GM13977 (cell line): ENCODE measurements at regions of chr16 and their contacts with region 1.

Region 1: DNA sequence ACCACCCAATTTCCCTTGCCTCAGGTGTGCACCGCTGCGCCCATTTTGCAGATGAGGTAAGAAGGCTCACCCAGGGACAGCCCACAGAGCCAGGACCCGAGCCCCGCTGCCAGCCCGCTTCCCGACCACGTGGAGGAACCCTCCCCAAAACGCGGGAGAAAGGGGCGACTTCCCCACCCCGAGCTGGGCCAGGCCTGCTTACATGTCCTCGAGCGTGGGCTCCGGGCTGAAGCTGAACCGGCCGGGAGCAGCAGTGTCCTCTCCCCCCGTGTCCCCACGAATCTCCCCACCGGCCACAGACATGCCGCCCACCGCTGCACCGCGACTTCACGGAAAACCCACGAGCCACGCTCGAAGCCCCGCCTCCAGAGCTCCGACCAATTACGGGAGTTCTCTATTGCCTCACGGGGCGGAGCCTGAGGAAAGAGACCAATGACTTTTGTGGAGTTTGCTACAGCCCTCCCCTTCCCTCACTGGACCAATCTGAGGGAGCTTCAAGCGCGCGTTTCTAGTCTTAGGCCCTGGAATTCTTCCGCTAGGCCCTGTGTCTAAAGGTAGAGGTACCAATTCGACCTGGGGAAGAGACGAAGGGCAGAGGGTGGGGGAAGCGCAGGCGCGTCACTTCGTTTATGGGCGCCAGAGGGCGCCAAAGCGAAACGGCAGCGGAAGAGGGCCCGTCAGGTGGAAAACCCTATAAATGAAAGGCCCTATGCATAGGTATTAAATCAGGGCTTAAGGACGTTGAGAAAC is at the start of gene DCTPP1:
- DNase-seq: peak; percentile 95
- CTCF ChIP-seq: peak; percentile 81

Region 2: DNA sequence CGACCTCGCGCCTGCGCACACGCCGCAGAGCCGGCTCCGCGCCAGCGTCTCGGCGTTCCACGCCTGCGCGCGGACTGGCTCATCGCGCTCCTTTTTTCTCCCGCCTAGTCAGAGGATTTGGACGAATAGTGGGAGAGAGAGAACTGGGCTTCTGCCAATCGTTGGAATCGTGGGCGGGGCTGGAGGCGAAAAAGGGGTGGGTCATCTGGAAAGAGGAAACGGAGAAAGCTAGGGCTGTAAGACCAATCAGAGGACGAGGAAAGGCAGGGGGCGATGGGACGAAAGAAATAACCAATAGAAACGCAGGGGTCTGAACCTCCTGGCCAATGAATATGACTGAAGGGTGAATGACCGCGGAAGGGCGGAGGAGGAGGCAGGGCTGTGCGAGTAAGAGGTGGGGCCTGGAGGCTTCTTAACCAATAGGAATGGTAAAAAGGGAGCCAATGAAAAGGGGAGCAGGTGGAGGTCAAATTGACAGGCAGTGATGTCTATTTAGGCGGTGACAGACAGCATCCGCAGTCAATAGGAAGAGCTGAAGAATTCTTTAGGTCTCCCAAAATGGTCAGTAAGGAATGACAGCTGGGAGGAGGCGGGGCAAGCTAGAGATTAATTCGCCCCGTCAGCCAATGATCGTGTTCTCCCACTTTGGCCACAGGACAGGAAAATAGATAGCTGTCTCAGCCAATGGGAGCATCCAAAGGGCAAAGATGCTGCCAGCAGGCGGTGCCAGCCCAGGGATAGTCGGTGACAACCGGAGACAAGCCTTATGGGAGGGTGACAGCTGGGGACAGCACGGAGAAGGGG is 59.2 kb before region 1 on chr16 and contains the start of gene TBC1D10B:
- in situ Hi-C with region 1: no loop called
- DNase-seq: peak; percentile 97
- CTCF ChIP-seq: no peak

Region 3: GRCh38 chr16:30609926-30610839 is 180.3 kb after region 1 on chr16 and contains the start of gene ZNF689:
- in situ Hi-C with region 1: loop called (anchors 10 kb)
- DNase-seq: peak; percentile 98
- CTCF ChIP-seq: no peak